Activated T-helper 2 cell treated with anti-CD3 and anti-CD28 coated beads, Interferon-gamma antibody, Interleukin-2, Interleukin-4, amounts not matched to agents 10 μg/mL and 5 μg/mL and 100 μg/mL, durations not matched to agents 14 hours and 24 hours and 36 hours (primary cell): ENCODE measurements at regions of chr9 and their contacts with region 1.

Region 1: GRCh38 chr9:99720455-99721050 is 101.1 kb upstream of the NR4A3 start:
- DNase-seq: no peak
- H3K4me3 Mint-ChIP-seq: peak overlapping the region; percentile 69
- H3K27ac Mint-ChIP-seq: peak overlapping the region; percentile 84
- H3K4me1 Mint-ChIP-seq: peaks cover 30% of the 10 kb centered on the region
- H3K27me3 Mint-ChIP-seq: no peaks in the 10 kb centered on the region

Region 2: DNA sequence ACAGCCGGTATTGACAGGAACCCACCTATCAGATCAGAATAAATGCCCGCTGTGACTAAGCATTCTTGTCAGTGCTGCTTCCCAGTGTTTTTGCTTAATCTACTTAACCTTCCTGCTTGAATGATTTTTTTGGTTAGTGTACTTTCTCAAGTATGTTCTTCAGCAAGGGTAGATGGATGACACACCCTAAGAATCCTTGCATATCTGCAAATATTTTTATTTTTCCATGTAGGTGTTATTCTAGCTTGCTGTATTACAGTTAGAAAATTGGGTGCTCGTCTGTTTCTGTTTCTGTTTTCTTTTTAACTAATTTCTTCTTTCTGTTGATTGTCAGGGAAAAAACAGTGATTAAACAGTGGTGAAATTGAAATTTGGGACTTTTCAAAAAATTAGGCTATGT is 434.0 kb before region 1 on chr9:
- intact Hi-C with region 1: no loop called
- DNase-seq: no peak
- H3K4me3 Mint-ChIP-seq: no peak overlapping the region
- H3K27ac Mint-ChIP-seq: no peak overlapping the region
- H3K4me1 Mint-ChIP-seq: peaks cover 4% of the 10 kb centered on the region
- H3K27me3 Mint-ChIP-seq: peaks cover 23% of the 10 kb centered on the region

Region 3: GRCh38 chr9:99579964-99580363 is 140.6 kb before region 1 on chr9:
- intact Hi-C with region 1: no loop called
- DNase-seq: no peak
- H3K4me3 Mint-ChIP-seq: no peak overlapping the region
- H3K27ac Mint-ChIP-seq: no peak overlapping the region
- H3K4me1 Mint-ChIP-seq: peaks cover 6% of the 10 kb centered on the region
- H3K27me3 Mint-ChIP-seq: peaks cover 8% of the 10 kb centered on the region

Region 4: DNA sequence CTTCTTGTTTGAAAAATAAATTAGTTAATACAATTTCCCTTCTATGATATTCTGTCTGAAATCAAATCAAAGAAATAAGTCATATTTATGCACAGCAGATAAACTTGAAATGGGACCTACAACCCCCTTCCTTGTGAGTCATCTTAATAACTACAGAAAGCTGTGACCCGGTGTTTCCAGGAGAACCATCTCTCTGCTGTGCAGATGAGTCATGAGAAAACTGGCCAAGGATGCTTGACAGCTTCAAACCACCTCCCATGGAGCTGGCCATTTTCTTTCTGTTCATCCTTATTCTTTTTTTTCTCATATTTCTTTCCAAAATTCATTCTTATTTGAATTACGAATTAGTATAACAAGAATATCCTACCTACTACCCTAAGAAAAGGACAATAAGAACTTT is 57.8 kb after region 1 on chr9:
- intact Hi-C with region 1: loop called (anchors 5 kb)
- DNase-seq: no peak
- H3K4me3 Mint-ChIP-seq: no peak overlapping the region
- H3K27ac Mint-ChIP-seq: no peak overlapping the region
- H3K4me1 Mint-ChIP-seq: peaks cover 16% of the 10 kb centered on the region
- H3K27me3 Mint-ChIP-seq: peaks cover 13% of the 10 kb centered on the region